ENCODE measurements at regions of chr11 and their contacts with region 1.

Region 1: GRCh38 chr11:1939006-1939625 is 8.0 kb upstream of the MRPL23 start:
- DNase-seq: no peak
- H3K4me3 ChIP-seq: no peak overlapping the region
- H3K4me3 Mint-ChIP-seq: peak overlapping the region in 1 of 2 donors; percentile 40
- H3K27ac ChIP-seq: no peak overlapping the region
- H3K27ac Mint-ChIP-seq: peak overlapping the region in 3 of 7 donors; percentile 63 to 84 (median 70)
- H3K4me1 ChIP-seq: no peaks in the 10 kb centered on the region
- H3K4me1 Mint-ChIP-seq: peaks cover 5% of the 10 kb centered on the region
- H3K27me3 ChIP-seq: peaks cover 0 to 3% of the 10 kb centered on the region in 2 donors
- H3K27me3 Mint-ChIP-seq: peaks cover 0 to 8% (median 5%) of the 10 kb centered on the region in 3 donors
- CTCF ChIP-seq: no peak

Region 2: GRCh38 chr11:1896923-1897322 is 42.2 kb before region 1 on chr11:
- intact Hi-C with region 1: loop called in 1 of 2 experiments (anchors 1 kb)
- DNase-seq: peak in 2 of 3 donors; percentile 33 to 39
- H3K4me3 ChIP-seq: peak overlapping the region; percentile 25 to 80 (median 49)
- H3K4me3 Mint-ChIP-seq: peak overlapping the region; percentile 88 to 95
- H3K27ac ChIP-seq: peak overlapping the region in 1 of 2 donors; percentile 59
- H3K27ac Mint-ChIP-seq: peak overlapping the region; percentile 47 to 87 (median 77)
- H3K4me1 ChIP-seq: peaks cover 17 to 19% of the 10 kb centered on the region in 2 donors
- H3K4me1 Mint-ChIP-seq: peaks cover 18% of the 10 kb centered on the region
- H3K27me3 ChIP-seq: no peaks in the 10 kb centered on the region
- H3K27me3 Mint-ChIP-seq: peaks cover 2 to 3% (median 2%) of the 10 kb centered on the region in 3 donors
- CTCF ChIP-seq: no peak

Region 3: GRCh38 chr11:1912289-1912878 is 26.7 kb before region 1 on chr11:
- intact Hi-C with region 1: loop called (anchors 1 kb)
- DNase-seq: peak; percentile 51 to 63 (median 53)
- H3K4me3 ChIP-seq: no peak overlapping the region
- H3K4me3 Mint-ChIP-seq: peak overlapping the region in 1 of 2 donors; percentile 21
- H3K27ac ChIP-seq: peak overlapping the region; percentile 5 to 58
- H3K27ac Mint-ChIP-seq: peak overlapping the region; percentile 40 to 86 (median 76)
- H3K4me1 ChIP-seq: peaks cover 11 to 15% of the 10 kb centered on the region in 2 donors
- H3K4me1 Mint-ChIP-seq: peaks cover 15% of the 10 kb centered on the region
- H3K27me3 ChIP-seq: no peaks in the 10 kb centered on the region
- H3K27me3 Mint-ChIP-seq: peaks cover 1 to 7% (median 6%) of the 10 kb centered on the region in 3 donors
- CTCF ChIP-seq: no peak

Measured in CD14-positive monocyte (primary cell).